ENCODE measurements at regions of chr5 and their contacts with region 1.

Region 1: DNA sequence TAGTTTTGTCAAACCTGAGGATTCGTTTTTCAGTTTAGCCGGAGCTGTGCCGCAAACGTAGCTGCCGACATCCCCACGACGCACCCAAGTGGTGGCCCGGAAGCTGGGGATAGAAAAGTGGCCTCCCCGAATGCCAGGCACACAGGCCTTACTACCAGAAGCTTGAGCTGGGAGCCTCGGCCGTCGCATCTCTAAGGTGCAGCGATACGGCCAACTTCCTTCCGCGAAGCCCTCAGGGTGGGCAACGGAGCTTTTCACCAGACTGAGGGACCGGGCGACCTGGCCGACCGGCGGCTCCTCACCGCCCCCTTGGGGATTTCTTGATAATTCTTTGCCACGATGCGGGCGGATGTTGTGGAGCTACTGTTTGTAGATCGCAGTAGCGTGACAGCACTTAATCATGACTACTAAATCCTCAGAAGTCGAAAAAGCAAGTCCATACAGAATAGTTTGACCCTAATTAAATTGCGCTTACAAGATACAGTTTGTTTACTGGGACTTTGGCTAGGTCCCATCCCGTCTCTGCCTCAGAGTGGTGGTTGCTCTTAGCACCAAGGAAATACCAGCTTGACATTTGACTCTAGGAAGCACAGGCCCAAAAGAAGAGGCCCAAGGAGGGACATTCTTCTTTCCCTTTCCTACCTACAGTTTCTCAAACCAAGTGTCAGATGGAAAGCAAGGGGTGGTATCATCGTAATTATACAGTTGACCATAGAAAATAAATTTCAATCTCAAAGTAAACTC is 613 bp upstream of the TMEM267 start:
- DNase-seq: peak; percentile 74 to 92 (median 82)
- ATAC-seq: peak; percentile 70
- H3K4me3 ChIP-seq: peak overlapping the region; percentile 77
- H3K4me3 Mint-ChIP-seq: peak overlapping the region; percentile 93
- H3K27ac ChIP-seq: peak overlapping the region; percentile 95
- H3K27ac Mint-ChIP-seq: peak overlapping the region; percentile 99
- H3K4me1 ChIP-seq: peaks cover 18% of the 10 kb centered on the region
- H3K4me1 Mint-ChIP-seq: peaks cover 61% of the 10 kb centered on the region
- H3K27me3 ChIP-seq: no peaks in the 10 kb centered on the region
- H3K27me3 Mint-ChIP-seq: no peaks in the 10 kb centered on the region
- CTCF ChIP-seq: peak; percentile 83

Region 2: DNA sequence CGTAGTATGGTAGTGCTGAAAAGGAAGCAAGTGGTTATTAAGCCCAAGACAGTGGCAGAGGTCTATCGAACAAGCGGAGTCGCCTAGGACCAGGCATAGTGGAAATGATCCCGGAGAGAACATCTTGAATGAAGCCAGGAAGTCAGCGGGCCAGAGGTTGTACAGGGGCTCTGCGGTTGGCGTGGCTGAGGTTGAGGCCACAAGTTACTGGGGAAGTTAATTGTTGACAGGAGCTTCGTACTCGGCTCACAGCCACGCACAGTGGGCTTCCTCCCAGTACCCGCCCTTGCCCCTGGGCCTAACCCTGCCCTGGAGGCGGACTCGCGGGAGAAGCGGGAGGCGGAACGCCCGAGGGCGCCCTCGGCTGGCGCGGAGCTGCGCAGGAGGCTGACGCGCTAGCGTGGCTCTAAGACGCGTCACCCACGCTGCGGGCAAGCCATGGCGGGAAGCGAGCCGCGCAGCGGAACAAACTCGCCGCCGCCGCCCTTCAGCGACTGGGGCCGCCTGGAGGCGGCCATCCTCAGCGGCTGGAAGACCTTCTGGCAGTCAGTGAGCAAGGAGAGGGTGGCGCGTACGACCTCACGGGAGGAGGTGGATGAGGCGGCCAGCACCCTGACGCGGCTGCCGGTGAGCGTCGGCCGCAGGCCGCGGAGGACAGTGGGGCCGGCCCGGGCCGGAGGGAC is 1559.3 kb before region 1 on chr5 and contains the start of gene FBXO4:
- CTCF ChIA-PET with region 1: interaction called, 3 read pairs
- POLR2A ChIA-PET with region 1: interaction called, 13 read pairs
- intact Hi-C with region 1: no loop called
- DNase-seq: peak; percentile 76 to 96 (median 86)
- ATAC-seq: peak; percentile 95
- H3K4me3 ChIP-seq: peak within 1 kb of the TSS; percentile 81
- H3K4me3 Mint-ChIP-seq: peak within 1 kb of the TSS; percentile 87
- H3K27ac ChIP-seq: peak within 1 kb of the TSS; percentile 93 to 95
- H3K27ac Mint-ChIP-seq: peak within 1 kb of the TSS; percentile 93
- H3K4me1 ChIP-seq: peaks cover 20% of the 10 kb centered on the region
- H3K4me1 Mint-ChIP-seq: peaks cover 29% of the 10 kb centered on the region
- H3K27me3 ChIP-seq: no peaks in the 10 kb centered on the region
- H3K27me3 Mint-ChIP-seq: no peaks in the 10 kb centered on the region
- CTCF ChIP-seq: peak; percentile 71
- total RNA-seq, gene FBXO4: 7.0 to 8.1 TPM

Region 3: DNA sequence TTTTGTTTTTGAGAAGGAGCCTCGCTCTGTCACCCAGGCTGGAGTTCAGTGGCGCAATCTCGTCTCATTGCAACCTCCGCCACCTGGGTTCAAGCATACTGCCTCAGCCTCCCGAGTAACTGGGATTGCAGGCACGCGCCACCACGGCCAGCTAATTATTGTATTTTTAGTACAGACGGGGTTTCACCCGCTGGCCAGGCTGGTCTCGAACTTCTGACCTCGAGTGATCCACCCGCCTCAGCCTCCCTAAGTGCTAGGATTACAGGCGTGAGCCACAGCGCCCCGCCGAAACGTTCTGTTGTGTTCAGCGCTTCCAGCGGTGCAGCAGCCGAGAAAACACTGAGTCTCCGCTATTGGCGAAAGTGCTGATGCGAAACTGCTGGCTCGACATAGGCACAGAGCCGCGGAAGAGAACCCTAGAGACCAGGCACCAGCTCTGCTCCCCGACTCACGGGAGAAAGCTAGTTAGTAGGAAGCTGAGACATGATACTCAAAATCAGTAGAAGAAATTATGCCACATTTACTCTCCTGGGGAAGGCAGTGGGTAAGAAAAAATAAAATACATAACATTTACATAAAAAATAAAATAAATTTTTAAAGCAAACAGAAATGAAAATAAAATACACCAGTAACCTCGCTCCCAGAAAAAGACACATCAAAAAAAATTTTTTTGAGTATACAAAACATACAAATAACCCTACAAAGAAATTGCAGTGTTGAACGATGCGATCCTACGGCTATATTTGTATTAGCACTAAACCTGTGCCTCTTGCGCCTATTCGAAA is 475.7 kb before region 1 on chr5:
- CTCF ChIA-PET with region 1: interaction called, 4 read pairs
- POLR2A ChIA-PET with region 1: interaction called, 70 read pairs
- intact Hi-C with region 1: no loop called
- DNase-seq: peak; percentile 87 to 97 (median 92)
- ATAC-seq: peak; percentile 63
- H3K4me3 ChIP-seq: peak overlapping the region; percentile 82
- H3K4me3 Mint-ChIP-seq: peak overlapping the region; percentile 92
- H3K27ac ChIP-seq: peak overlapping the region; percentile 91 to 95
- H3K27ac Mint-ChIP-seq: peak overlapping the region; percentile 95
- H3K4me1 ChIP-seq: peaks cover 36% of the 10 kb centered on the region
- H3K4me1 Mint-ChIP-seq: peaks cover 42% of the 10 kb centered on the region
- H3K27me3 ChIP-seq: no peaks in the 10 kb centered on the region
- H3K27me3 Mint-ChIP-seq: no peaks in the 10 kb centered on the region
- CTCF ChIP-seq: no peak

Region 4: GRCh38 chr5:43110606-43111442 is 373.5 kb before region 1 on chr5:
- CTCF ChIA-PET with region 1: interaction called, 7 read pairs
- POLR2A ChIA-PET with region 1: interaction called, 23 read pairs
- intact Hi-C with region 1: no loop called
- DNase-seq: peak in 11 of 14 experiments; percentile 11 to 72 (median 29)
- ATAC-seq: peak; percentile 87
- H3K4me3 ChIP-seq: no peak overlapping the region
- H3K4me3 Mint-ChIP-seq: peak overlapping the region; percentile 44
- H3K27ac ChIP-seq: peak overlapping the region in 1 of 2 donors; percentile 11
- H3K27ac Mint-ChIP-seq: peak overlapping the region; percentile 74
- H3K4me1 ChIP-seq: peaks cover 25% of the 10 kb centered on the region
- H3K4me1 Mint-ChIP-seq: peaks cover 30% of the 10 kb centered on the region
- H3K27me3 ChIP-seq: no peaks in the 10 kb centered on the region
- H3K27me3 Mint-ChIP-seq: no peaks in the 10 kb centered on the region
- CTCF ChIP-seq: peak; percentile 67

Region 5: GRCh38 chr5:43215073-43215631 is 269.1 kb before region 1 on chr5:
- CTCF ChIA-PET with region 1: no interaction called
- POLR2A ChIA-PET with region 1: no interaction called
- intact Hi-C with region 1: no loop called
- DNase-seq: peak in 1 of 14 experiments; percentile 8
- ATAC-seq: no peak
- H3K4me3 ChIP-seq: no peak overlapping the region
- H3K4me3 Mint-ChIP-seq: no peak overlapping the region
- H3K27ac ChIP-seq: no peak overlapping the region
- H3K27ac Mint-ChIP-seq: no peak overlapping the region
- H3K4me1 ChIP-seq: no peaks in the 10 kb centered on the region
- H3K4me1 Mint-ChIP-seq: no peaks in the 10 kb centered on the region
- H3K27me3 ChIP-seq: no peaks in the 10 kb centered on the region
- H3K27me3 Mint-ChIP-seq: peaks cover 12% of the 10 kb centered on the region
- CTCF ChIP-seq: no peak

Region 6: DNA sequence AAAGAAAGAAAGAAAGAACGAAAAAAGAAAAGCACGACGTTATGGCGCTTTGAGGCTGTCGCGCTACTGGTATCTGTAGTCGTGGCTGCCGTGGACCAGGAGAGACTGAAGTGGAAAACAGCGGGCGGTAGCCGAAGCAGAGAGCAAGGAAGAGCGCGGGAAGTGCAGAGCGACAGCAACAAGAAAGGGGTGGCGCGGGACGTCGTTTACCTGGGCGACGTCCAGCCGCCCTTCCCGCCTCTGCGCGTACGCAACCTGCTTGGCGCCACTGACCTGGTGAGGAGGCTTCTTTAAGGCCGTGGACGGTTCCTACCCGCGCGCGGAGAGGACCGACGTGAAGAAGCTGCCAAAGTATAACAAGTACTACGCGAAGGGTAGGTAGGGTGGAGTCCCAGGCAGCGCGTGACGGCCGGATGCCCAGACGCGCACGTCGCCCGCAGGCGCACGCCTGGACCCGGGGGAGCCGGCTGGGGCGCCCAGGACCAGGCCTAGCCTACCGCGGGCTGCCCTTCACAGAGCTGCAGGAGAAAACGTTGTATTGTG is 87.4 kb before region 1 on chr5:
- CTCF ChIA-PET with region 1: interaction called, 5 read pairs
- POLR2A ChIA-PET with region 1: interaction called, 65 read pairs
- intact Hi-C with region 1: loop called (anchors 5 kb)
- DNase-seq: peak; percentile 36 to 78 (median 55)
- ATAC-seq: peak; percentile 94
- H3K4me3 ChIP-seq: peak overlapping the region; percentile 86
- H3K4me3 Mint-ChIP-seq: peak overlapping the region; percentile 96
- H3K27ac ChIP-seq: peak overlapping the region; percentile 40 to 45
- H3K27ac Mint-ChIP-seq: peak overlapping the region; percentile 94
- H3K4me1 ChIP-seq: peaks cover 14% of the 10 kb centered on the region
- H3K4me1 Mint-ChIP-seq: peaks cover 32% of the 10 kb centered on the region
- H3K27me3 ChIP-seq: no peaks in the 10 kb centered on the region
- H3K27me3 Mint-ChIP-seq: no peaks in the 10 kb centered on the region
- CTCF ChIP-seq: no peak

Region 7: DNA sequence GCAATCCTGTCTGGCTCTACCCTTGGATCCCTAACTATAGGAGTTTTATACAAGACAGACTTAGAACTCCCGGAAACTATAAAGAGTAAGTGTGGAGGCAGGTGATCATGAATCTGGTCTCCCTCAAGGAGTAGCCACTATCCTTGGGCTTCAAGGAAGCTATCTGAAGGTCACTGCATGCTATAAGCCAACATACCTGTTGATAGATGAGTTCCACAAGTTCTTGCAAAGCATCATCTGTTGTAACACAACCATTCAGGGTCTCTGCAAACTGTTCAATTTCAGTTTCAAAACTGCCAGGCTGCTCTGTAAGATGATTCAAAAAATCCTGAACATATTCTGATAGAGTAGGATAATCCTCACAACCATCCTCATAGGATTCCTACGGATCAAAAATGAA is 63.3 kb after region 1 on chr5:
- CTCF ChIA-PET with region 1: interaction called, 3 read pairs
- POLR2A ChIA-PET with region 1: interaction called, 163 read pairs
- intact Hi-C with region 1: no loop called
- DNase-seq: no peak
- ATAC-seq: no peak
- H3K4me3 ChIP-seq: no peak overlapping the region
- H3K4me3 Mint-ChIP-seq: no peak overlapping the region
- H3K27ac ChIP-seq: no peak overlapping the region
- H3K27ac Mint-ChIP-seq: no peak overlapping the region
- H3K4me1 ChIP-seq: no peaks in the 10 kb centered on the region
- H3K4me1 Mint-ChIP-seq: peaks cover 25% of the 10 kb centered on the region
- H3K27me3 ChIP-seq: no peaks in the 10 kb centered on the region
- H3K27me3 Mint-ChIP-seq: no peaks in the 10 kb centered on the region
- CTCF ChIP-seq: no peak

Measured in CD4-positive, alpha-beta T cell (primary cell).